ENCODE measurements at regions of chr10 and their contacts with region 1.

Region 1: DNA sequence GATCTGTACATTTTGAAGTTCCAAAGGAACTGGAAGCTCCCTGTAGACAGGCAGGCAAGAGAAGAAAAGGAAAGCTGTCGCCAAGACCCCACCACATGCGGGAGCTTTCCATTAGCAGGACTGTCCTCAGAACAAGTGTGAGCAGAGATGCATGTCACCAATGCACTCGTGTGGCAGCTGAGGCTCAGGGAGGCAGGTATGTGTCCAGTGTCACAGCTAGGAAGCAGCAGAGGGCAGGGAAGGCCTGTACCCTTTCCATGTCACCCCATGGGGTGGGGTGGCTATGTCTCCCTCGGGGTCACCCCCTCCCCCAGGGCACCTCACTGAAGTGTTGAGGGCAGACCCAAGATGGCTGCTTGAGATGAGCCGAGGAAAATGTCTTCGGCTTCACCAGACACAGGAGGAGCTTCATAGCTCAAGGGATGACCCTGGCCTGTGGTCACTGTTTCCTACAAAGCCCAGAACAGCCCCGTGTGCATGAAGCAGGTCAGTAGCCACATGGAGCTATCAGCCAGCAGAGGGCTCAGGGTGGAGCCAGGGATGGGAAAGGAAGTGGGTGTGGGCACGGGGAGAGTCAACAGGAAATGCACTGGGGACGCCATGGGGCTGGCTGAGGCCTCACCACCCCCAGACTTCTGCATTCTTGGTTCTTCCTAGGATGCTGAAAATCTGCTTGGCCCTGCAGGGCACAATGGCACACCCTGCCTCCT is 96.6 kb downstream of the FAM53B start:
- DNase-seq: peak; percentile 44 to 90 (median 80)
- ATAC-seq: peak; percentile 54
- H3K4me3 ChIP-seq: peak overlapping the region; percentile 11 to 14
- H3K4me3 Mint-ChIP-seq: peak overlapping the region; percentile 74
- H3K27ac ChIP-seq: peak overlapping the region; percentile 65 to 93
- H3K27ac Mint-ChIP-seq: peak overlapping the region; percentile 94
- H3K4me1 ChIP-seq: peaks cover 84% of the 10 kb centered on the region
- H3K4me1 Mint-ChIP-seq: peaks cover 80% of the 10 kb centered on the region
- H3K27me3 ChIP-seq: no peaks in the 10 kb centered on the region
- H3K27me3 Mint-ChIP-seq: no peaks in the 10 kb centered on the region
- CTCF ChIP-seq: peak; percentile 30

Region 2: DNA sequence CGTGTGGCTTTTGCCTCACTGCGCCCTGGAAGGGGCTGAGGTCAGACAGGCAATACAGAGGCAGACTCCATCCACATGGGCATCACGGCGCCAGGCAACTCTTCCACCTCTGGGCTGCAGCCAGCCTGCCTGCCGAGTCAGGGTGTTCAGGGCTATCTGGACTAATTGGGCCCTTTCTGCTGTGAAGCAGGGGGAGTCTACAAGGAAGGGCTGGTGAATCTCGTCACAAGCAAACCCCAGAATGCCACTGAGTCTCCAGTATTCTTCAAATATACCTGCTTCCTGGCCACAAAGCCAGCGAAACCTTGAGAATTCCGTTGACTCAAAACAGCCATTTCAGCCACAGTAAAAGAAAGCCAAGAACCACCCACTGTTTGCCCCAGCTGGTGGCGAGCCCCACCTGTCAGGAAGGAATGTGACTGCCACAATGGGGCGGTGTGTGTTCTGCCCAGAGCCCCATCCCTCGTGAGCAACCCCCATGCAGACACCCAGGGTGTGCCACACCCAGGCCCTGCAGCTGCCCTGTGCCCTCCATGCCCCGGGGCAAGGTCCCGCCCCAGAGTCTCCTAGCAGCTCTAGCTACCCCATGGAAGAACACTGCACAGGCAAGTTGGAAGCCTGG is 20.7 kb before region 1 on chr10:
- CTCF ChIA-PET with region 1: interaction called, 15 read pairs
- POLR2A ChIA-PET with region 1: interaction called, 6 read pairs
- intact Hi-C with region 1: no loop called
- DNase-seq: peak in 7 of 9 experiments; percentile 49 to 78 (median 62)
- ATAC-seq: peak; percentile 80
- H3K4me3 ChIP-seq: no peak overlapping the region
- H3K4me3 Mint-ChIP-seq: peak overlapping the region; percentile 45
- H3K27ac ChIP-seq: peak overlapping the region in 1 of 2 experiments; percentile 48
- H3K27ac Mint-ChIP-seq: peak overlapping the region; percentile 81
- H3K4me1 ChIP-seq: peaks cover 40% of the 10 kb centered on the region
- H3K4me1 Mint-ChIP-seq: peaks cover 52% of the 10 kb centered on the region
- H3K27me3 ChIP-seq: no peaks in the 10 kb centered on the region
- H3K27me3 Mint-ChIP-seq: no peaks in the 10 kb centered on the region
- CTCF ChIP-seq: no peak

Region 3: GRCh38 chr10:124632064-124632531 is 15.5 kb before region 1 on chr10:
- CTCF ChIA-PET with region 1: interaction called, 15 read pairs
- POLR2A ChIA-PET with region 1: interaction called, 15 read pairs
- intact Hi-C with region 1: no loop called
- DNase-seq: peak in 6 of 9 experiments; percentile 43 to 73 (median 62)
- ATAC-seq: peak; percentile 30
- H3K4me3 ChIP-seq: no peak overlapping the region
- H3K4me3 Mint-ChIP-seq: no peak overlapping the region
- H3K27ac ChIP-seq: peak overlapping the region in 1 of 2 experiments; percentile 26
- H3K27ac Mint-ChIP-seq: peak overlapping the region; percentile 45
- H3K4me1 ChIP-seq: peaks cover 53% of the 10 kb centered on the region
- H3K4me1 Mint-ChIP-seq: peaks cover 64% of the 10 kb centered on the region
- H3K27me3 ChIP-seq: no peaks in the 10 kb centered on the region
- H3K27me3 Mint-ChIP-seq: no peaks in the 10 kb centered on the region
- CTCF ChIP-seq: peak; percentile 42

Region 4: GRCh38 chr10:124677749-124678556 is 30.4 kb after region 1 on chr10:
- CTCF ChIA-PET with region 1: interaction called, 5 read pairs
- POLR2A ChIA-PET with region 1: interaction called, 7 read pairs
- intact Hi-C with region 1: loop called in 1 of 2 experiments (anchors 2 kb)
- DNase-seq: peak in 1 of 9 experiments; percentile 41
- ATAC-seq: peak; percentile 26
- H3K4me3 ChIP-seq: peak overlapping the region; percentile 27 to 40
- H3K4me3 Mint-ChIP-seq: peak overlapping the region; percentile 76
- H3K27ac ChIP-seq: peak overlapping the region in 1 of 2 experiments; percentile 57
- H3K27ac Mint-ChIP-seq: peak overlapping the region; percentile 91
- H3K4me1 ChIP-seq: peaks cover 86% of the 10 kb centered on the region
- H3K4me1 Mint-ChIP-seq: peaks cover 86% of the 10 kb centered on the region
- H3K27me3 ChIP-seq: no peaks in the 10 kb centered on the region
- H3K27me3 Mint-ChIP-seq: no peaks in the 10 kb centered on the region
- CTCF ChIP-seq: no peak

Region 5: DNA sequence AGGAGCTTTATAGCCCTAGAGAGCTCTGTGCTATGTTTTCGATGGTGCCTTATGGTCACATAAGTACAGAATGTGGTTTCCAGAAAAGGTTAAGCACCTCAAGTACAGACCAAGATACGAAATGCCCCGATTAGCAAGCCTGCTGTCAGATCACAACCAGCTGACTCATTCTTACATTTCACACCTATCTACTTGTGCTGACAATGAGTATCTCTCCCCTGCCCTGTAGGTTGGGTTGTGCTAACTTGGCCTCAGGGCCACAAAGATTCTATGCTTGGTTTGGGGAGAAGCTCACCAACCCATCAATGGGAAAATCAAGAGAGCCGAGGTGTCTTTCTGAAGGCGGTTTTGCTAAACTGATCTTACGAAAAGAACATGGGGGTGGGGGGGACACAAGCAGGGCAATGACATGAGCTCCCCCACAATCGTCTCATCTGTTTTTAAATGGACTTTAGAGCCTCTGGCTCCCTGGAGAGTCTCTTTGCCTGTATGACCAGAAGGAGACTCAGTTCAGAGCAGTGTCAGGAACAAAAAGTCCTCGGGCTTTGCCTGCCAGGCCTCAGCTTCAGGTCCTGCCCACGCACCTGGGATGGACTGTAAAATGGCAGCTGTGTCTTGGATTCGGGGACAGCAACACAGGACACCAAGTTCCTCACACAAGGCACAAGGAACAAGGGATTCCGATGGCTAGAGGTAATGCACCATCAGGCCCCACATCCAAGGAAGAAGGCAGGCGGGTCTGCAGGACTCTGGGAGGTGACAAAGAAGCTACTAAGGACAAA is 41.5 kb after region 1 on chr10:
- CTCF ChIA-PET with region 1: interaction called, 10 read pairs
- POLR2A ChIA-PET with region 1: interaction called, 5 read pairs
- intact Hi-C with region 1: loop called in 1 of 2 experiments (anchors 5 kb)
- DNase-seq: peak in 8 of 9 experiments; percentile 19 to 91 (median 60)
- ATAC-seq: peak; percentile 84
- H3K4me3 ChIP-seq: no peak overlapping the region
- H3K4me3 Mint-ChIP-seq: peak overlapping the region; percentile 47
- H3K27ac ChIP-seq: peak overlapping the region; percentile 12 to 72
- H3K27ac Mint-ChIP-seq: peak overlapping the region; percentile 87
- H3K4me1 ChIP-seq: peaks cover 72% of the 10 kb centered on the region
- H3K4me1 Mint-ChIP-seq: peaks cover 81% of the 10 kb centered on the region
- H3K27me3 ChIP-seq: no peaks in the 10 kb centered on the region
- H3K27me3 Mint-ChIP-seq: no peaks in the 10 kb centered on the region
- CTCF ChIP-seq: no peak

Region 6: GRCh38 chr10:124732931-124733570 is 85.5 kb after region 1 on chr10:
- CTCF ChIA-PET with region 1: interaction called, 11 read pairs
- POLR2A ChIA-PET with region 1: interaction called, 6 read pairs
- intact Hi-C with region 1: no loop called
- DNase-seq: peak in 6 of 9 experiments; percentile 52 to 72 (median 55)
- ATAC-seq: peak; percentile 48
- H3K4me3 ChIP-seq: peak overlapping the region in 1 of 2 experiments; percentile 21
- H3K4me3 Mint-ChIP-seq: peak overlapping the region; percentile 63
- H3K27ac ChIP-seq: peak overlapping the region; percentile 16 to 75
- H3K27ac Mint-ChIP-seq: peak overlapping the region; percentile 84
- H3K4me1 ChIP-seq: peaks cover 88% of the 10 kb centered on the region
- H3K4me1 Mint-ChIP-seq: peaks cover 94% of the 10 kb centered on the region
- H3K27me3 ChIP-seq: no peaks in the 10 kb centered on the region
- H3K27me3 Mint-ChIP-seq: no peaks in the 10 kb centered on the region
- CTCF ChIP-seq: no peak

Measured in CD8-positive, alpha-beta T cell (primary cell).